ENCODE measurements at regions of chr1 and their contacts with region 1.

Region 1: DNA sequence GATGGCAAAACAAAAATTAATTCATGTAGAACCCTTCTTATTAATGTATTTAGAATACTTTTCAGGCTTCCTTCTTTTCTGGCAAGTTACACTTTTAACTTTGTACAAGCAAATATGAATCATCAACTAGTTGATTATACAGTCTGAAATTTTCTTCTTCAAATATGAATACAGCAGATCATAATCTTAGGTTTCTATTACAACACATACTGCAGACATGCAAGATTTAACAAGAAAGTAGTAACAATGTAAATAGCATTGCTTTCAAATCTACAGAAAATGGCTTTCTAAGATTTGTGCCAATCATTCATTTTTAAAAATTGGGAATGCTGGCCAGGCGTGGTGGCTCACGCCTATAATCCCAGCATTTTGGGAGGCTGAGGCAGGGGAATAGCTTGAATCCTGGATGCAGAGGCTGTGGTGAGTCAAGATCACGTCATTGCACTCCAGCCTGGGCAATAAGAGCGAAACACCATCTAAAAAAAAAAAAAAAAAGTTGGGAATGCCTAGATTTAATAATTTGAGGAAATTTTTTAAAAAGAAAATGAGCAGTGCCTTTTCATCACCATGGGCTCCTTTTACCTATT is 68.4 kb upstream of the DPYD start:
- DNase-seq: peak; percentile 70
- ATAC-seq: peak; percentile 92
- H3K4me3 ChIP-seq: peak overlapping the region; percentile 19; the same call in 1 of the 2 replicates
- H3K27ac ChIP-seq: peak overlapping the region; percentile 67
- H3K4me1 ChIP-seq: peaks cover 21% of the 10 kb centered on the region
- H3K27me3 ChIP-seq: no peaks in the 10 kb centered on the region
- CTCF ChIP-seq: no peak

Region 2: GRCh38 chr1:97832481-97832880 is 156.7 kb before region 1 on chr1:
- CTCF ChIA-PET with region 1: no interaction called
- POLR2A ChIA-PET with region 1: no interaction called
- intact Hi-C with region 1: no loop called
- DNase-seq: no peak
- ATAC-seq: no peak
- H3K4me3 ChIP-seq: no peak overlapping the region
- H3K27ac ChIP-seq: no peak overlapping the region
- H3K4me1 ChIP-seq: no peaks in the 10 kb centered on the region
- H3K27me3 ChIP-seq: no peaks in the 10 kb centered on the region
- CTCF ChIP-seq: no peak

Region 3: DNA sequence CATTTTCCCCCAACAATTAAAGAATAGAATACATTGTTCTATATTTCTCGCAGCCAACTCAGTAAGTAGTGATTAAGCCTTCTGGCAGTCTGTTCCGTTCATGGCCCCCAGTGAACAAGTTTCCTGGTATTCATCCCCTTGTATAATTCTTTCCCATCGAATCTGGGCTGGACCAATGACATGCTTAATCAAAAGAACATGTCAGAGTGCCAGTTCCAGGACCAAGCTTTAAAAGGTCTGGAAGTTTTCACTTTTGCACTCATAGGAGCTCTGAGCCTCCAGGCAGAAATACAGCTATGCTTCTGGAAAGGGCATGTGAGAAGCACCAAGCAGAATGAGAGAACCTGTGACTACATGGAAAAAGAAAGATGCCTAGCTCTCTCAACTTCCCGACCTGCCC is 45.8 kb before region 1 on chr1:
- CTCF ChIA-PET with region 1: no interaction called
- POLR2A ChIA-PET with region 1: no interaction called
- intact Hi-C with region 1: loop called (anchors 2 kb)
- DNase-seq: no peak
- ATAC-seq: no peak
- H3K4me3 ChIP-seq: no peak overlapping the region
- H3K27ac ChIP-seq: no peak overlapping the region
- H3K4me1 ChIP-seq: peaks cover 8% of the 10 kb centered on the region
- H3K27me3 ChIP-seq: no peaks in the 10 kb centered on the region
- CTCF ChIP-seq: no peak

Region 4: GRCh38 chr1:98860329-98860728 is 871.1 kb after region 1 on chr1:
- CTCF ChIA-PET with region 1: no interaction called
- POLR2A ChIA-PET with region 1: no interaction called
- intact Hi-C with region 1: no loop called
- DNase-seq: no peak
- ATAC-seq: no peak
- H3K4me3 ChIP-seq: no peak overlapping the region
- H3K27ac ChIP-seq: no peak overlapping the region
- H3K4me1 ChIP-seq: no peaks in the 10 kb centered on the region
- H3K27me3 ChIP-seq: no peaks in the 10 kb centered on the region
- CTCF ChIP-seq: no peak

Measured in PC-3 (cell line).